ENCODE measurements at regions of chr10 and their contacts with region 1.

Region 1: GRCh38 chr10:79463578-79464496 is 18.4 kb upstream of the ZCCHC24 start:
- DNase-seq: no peak
- ATAC-seq: no peak
- H3K4me3 Mint-ChIP-seq: no peak overlapping the region
- H3K27ac Mint-ChIP-seq: no peak overlapping the region
- H3K4me1 Mint-ChIP-seq: no peaks in the 10 kb centered on the region
- H3K27me3 Mint-ChIP-seq: no peaks in the 10 kb centered on the region

Region 2: DNA sequence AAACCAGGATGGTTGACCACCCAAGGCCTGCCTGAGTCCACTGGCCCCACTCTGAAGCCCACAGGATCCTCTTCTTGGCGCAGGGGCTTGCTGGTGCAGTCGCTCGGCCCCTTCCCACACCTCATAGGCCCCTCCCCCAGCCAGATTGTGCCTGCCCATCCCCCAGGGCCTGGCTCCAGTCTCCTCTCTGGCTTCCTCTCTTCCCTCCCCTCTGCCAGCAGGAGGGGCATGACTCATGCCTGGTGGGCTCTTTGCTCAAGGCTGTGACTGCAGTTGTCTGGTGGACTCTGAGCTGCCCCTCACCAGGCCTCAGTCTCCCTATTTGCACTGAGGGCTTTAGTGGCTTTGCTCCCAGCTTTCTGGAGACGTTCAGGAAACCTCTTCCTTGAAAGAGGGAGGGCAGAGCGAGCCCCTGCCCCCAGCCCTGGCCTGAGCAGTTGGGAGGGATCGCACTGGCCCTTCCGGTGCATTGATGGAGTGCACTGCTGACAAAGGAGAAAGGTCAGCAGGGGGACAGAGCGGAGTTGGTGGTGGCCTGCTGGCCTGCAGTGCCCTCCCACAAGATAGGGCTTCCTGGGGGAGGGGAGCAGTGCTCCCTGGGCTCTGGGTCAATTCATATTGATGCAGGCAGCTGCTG is 334.4 kb before region 1 on chr10:
- CTCF ChIA-PET with region 1: no interaction called
- POLR2A ChIA-PET with region 1: no interaction called
- intact Hi-C with region 1: no loop called
- DNase-seq: no peak
- ATAC-seq: no peak
- H3K4me3 Mint-ChIP-seq: no peak overlapping the region
- H3K27ac Mint-ChIP-seq: no peak overlapping the region
- H3K4me1 Mint-ChIP-seq: peaks cover 2% of the 10 kb centered on the region
- H3K27me3 Mint-ChIP-seq: no peaks in the 10 kb centered on the region

Region 3: GRCh38 chr10:79292891-79293746 is 170.7 kb before region 1 on chr10:
- CTCF ChIA-PET with region 1: interaction called, 3 read pairs
- POLR2A ChIA-PET with region 1: no interaction called
- intact Hi-C with region 1: loop called in 1 of 2 experiments (anchors 1 kb)
- DNase-seq: peak; percentile 64
- ATAC-seq: peak; percentile 78
- H3K4me3 Mint-ChIP-seq: no peak overlapping the region
- H3K27ac Mint-ChIP-seq: no peak overlapping the region
- H3K4me1 Mint-ChIP-seq: peaks cover 15% of the 10 kb centered on the region
- H3K27me3 Mint-ChIP-seq: no peaks in the 10 kb centered on the region

Region 4: GRCh38 chr10:79400146-79401004 is 63.5 kb before region 1 on chr10:
- CTCF ChIA-PET with region 1: interaction called, 8 read pairs
- POLR2A ChIA-PET with region 1: no interaction called
- intact Hi-C with region 1: loop called in 1 of 2 experiments (anchors 1 kb)
- DNase-seq: peak; percentile 82
- ATAC-seq: peak; percentile 78
- H3K4me3 Mint-ChIP-seq: no peak overlapping the region
- H3K27ac Mint-ChIP-seq: no peak overlapping the region
- H3K4me1 Mint-ChIP-seq: peaks cover 4% of the 10 kb centered on the region
- H3K27me3 Mint-ChIP-seq: peaks cover 2% of the 10 kb centered on the region

Region 5: DNA sequence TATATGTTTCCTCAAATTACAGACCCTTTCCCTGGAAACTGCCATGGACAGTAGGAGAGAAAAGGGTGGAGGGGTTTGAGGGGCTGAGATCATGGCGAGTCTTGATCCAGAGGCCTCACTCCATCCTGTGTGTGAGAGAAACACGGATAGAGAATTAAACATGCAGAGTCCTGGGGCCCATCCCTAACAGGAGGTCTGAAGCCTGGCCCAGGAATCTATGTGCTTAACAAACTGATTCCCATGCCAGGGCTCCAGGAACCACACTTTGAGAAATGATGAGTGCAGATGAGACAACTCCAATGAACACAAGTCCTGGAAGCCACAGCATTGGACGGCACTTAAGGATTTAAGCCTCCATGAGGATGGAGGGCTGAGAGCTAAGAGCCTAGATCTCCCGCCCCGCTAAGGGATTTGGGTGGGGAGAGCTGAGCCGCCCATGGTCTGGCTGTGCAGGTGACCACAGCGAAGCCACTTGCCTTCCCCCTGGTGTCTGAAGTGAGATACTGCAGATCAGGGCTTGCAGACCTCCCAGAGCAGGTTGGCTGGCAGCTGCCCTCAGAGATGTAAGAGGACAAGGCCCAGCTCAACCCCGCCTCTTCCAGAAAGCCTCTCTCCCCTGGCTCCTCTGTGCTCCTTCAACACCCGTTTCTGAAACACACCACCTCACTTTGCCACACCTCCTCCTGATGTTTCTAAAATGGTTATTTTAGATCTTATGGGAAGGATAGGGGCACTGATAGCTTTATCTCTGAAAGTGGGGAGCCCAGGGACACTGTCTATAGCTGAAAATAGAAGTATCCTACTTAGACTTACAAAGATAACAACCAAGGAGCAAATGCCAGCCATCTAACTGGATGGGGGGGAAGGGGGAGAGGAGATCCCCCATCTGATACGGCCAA is 23.7 kb after region 1 on chr10:
- CTCF ChIA-PET with region 1: interaction called, 10 read pairs
- POLR2A ChIA-PET with region 1: no interaction called
- intact Hi-C with region 1: no loop called
- DNase-seq: peak; percentile 59
- ATAC-seq: peak; percentile 69
- H3K4me3 Mint-ChIP-seq: no peak overlapping the region
- H3K27ac Mint-ChIP-seq: no peak overlapping the region
- H3K4me1 Mint-ChIP-seq: no peaks in the 10 kb centered on the region
- H3K27me3 Mint-ChIP-seq: peaks cover 2% of the 10 kb centered on the region

Region 6: DNA sequence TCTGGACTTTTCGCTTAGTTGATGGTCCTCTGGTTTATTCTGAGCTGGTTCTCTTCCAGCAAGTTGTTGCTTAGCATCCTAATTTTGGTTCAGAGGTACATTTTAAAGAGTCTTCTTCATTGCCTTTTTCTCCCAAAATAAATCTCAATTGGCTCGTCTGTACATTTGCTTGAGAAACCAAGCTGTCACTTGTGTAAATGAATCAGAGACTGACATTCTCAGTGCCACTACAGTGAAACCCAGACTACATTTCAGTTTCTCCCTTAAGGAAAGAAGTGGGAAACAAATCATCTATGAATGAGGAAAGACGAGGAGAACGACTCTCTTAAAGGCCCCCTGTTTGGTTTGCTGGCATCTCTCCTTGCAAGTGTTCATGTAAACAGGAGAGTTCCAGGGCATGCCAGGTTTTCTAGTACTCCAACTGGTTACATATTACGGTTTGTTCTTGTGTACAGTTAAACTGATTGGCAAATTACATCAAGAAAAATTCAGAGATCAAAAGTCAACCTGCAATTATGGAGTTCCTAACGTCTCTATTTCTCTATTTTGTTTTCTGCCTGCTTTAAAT is 1728.5 kb after region 1 on chr10:
- CTCF ChIA-PET with region 1: no interaction called
- POLR2A ChIA-PET with region 1: no interaction called
- intact Hi-C with region 1: no loop called
- DNase-seq: no peak
- ATAC-seq: no peak
- H3K4me3 Mint-ChIP-seq: no peak overlapping the region
- H3K27ac Mint-ChIP-seq: no peak overlapping the region
- H3K4me1 Mint-ChIP-seq: no peaks in the 10 kb centered on the region
- H3K27me3 Mint-ChIP-seq: no peaks in the 10 kb centered on the region

Measured in activated CD4-positive, alpha-beta T cell treated with anti-CD3 and anti-CD28 coated beads for 36 hours (primary cell).